ENCODE measurements at regions of chr2 and their contacts with region 1.

Region 1: GRCh38 chr2:161160226-161161069 is at the start of gene TANK:
- DNase-seq: peak; percentile 95
- ATAC-seq: peak; percentile 95
- H3K4me3 Mint-ChIP-seq: peak within 1 kb of the TSS; percentile 91
- H3K27ac Mint-ChIP-seq: peak within 1 kb of the TSS; percentile 99
- H3K4me1 Mint-ChIP-seq: peaks cover 52% of the 10 kb centered on the region
- H3K27me3 Mint-ChIP-seq: no peaks in the 10 kb centered on the region
- total RNA-seq, gene TANK: 54.6 to 59.7 TPM

Region 2: GRCh38 chr2:159904127-159904958 is 1256.1 kb before region 1 on chr2:
- CTCF ChIA-PET with region 1: no interaction called
- POLR2A ChIA-PET with region 1: no interaction called
- intact Hi-C with region 1: loop called (anchors 10 kb)
- DNase-seq: peak; percentile 91
- ATAC-seq: peak; percentile 76
- H3K4me3 Mint-ChIP-seq: peak within 1 kb of the TSS; percentile 93
- H3K27ac Mint-ChIP-seq: peak within 1 kb of the TSS; percentile 97
- H3K4me1 Mint-ChIP-seq: peaks cover 73% of the 10 kb centered on the region
- H3K27me3 Mint-ChIP-seq: no peaks in the 10 kb centered on the region

Region 3: DNA sequence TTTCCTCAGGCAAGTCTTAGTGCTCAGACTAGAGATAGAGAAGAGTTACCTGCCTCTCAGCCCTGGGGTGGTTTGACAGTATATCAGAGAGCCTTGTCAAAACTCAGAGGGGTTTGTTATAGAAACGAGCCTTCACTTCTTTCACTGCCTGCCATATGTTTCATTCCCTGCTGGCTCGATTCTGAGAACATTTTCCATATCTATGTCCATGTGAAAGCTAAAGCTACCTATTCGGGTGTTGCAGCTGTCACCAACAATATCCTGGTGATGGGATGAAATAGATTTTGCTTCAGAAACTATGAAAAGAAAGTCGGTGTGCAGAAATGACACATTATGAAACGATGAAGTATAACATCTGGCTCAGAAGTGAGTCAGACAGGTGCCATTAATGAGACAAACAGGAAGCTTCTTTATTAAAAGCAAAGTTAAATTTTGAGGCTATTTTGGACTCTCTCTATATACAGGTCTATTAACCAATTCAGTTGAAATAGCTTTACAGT is 56.3 kb before region 1 on chr2:
- CTCF ChIA-PET with region 1: no interaction called
- POLR2A ChIA-PET with region 1: no interaction called
- intact Hi-C with region 1: loop called in 1 of 2 experiments (anchors 2 kb)
- DNase-seq: peak; percentile 10
- ATAC-seq: peak; percentile 84
- H3K4me3 Mint-ChIP-seq: no peak overlapping the region
- H3K27ac Mint-ChIP-seq: no peak overlapping the region
- H3K4me1 Mint-ChIP-seq: peaks cover 32% of the 10 kb centered on the region
- H3K27me3 Mint-ChIP-seq: no peaks in the 10 kb centered on the region

Region 4: GRCh38 chr2:161130354-161130753 is 30.1 kb before region 1 on chr2:
- CTCF ChIA-PET with region 1: no interaction called
- POLR2A ChIA-PET with region 1: no interaction called
- intact Hi-C with region 1: no loop called
- DNase-seq: no peak
- ATAC-seq: no peak
- H3K4me3 Mint-ChIP-seq: no peak overlapping the region
- H3K27ac Mint-ChIP-seq: no peak overlapping the region
- H3K4me1 Mint-ChIP-seq: peaks cover 25% of the 10 kb centered on the region
- H3K27me3 Mint-ChIP-seq: peaks cover 3% of the 10 kb centered on the region

Region 5: GRCh38 chr2:161147856-161148569 is 12.4 kb before region 1 on chr2:
- CTCF ChIA-PET with region 1: interaction called, 3 read pairs
- POLR2A ChIA-PET with region 1: no interaction called
- intact Hi-C with region 1: loop called in 1 of 2 experiments (anchors 1 kb)
- DNase-seq: no peak
- ATAC-seq: no peak
- H3K4me3 Mint-ChIP-seq: no peak overlapping the region
- H3K27ac Mint-ChIP-seq: no peak overlapping the region
- H3K4me1 Mint-ChIP-seq: peaks cover 38% of the 10 kb centered on the region
- H3K27me3 Mint-ChIP-seq: no peaks in the 10 kb centered on the region

Region 6: DNA sequence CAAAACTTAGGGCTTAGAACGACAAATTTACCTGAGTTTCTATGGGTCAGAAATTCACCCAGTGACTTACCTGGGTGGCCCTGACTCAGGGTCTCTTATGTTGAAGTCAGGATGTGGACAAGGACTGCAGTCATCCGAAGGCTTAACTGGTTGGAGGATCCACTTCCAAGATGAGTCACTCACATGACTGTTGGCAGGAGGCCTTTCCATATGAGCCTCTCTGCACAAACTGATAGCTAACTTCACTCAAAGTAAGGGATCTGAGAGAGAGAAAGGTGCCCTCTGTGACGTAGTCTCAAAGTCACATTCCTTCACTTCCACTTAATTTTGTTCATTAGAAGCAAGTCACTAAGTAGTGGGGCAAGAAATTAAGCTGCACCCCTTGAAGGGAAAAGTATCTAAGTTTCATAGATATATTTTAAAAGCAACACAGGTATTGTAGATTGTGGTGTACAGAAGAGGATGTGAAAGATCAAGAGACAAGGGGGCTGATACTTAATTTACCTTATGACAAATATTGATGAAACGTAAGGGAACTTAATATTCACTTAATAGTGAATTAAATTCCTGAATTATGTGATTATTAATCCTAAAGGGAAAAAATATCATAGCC is 48.2 kb after region 1 on chr2:
- CTCF ChIA-PET with region 1: no interaction called
- POLR2A ChIA-PET with region 1: no interaction called
- intact Hi-C with region 1: no loop called
- DNase-seq: no peak
- ATAC-seq: no peak
- H3K4me3 Mint-ChIP-seq: no peak overlapping the region
- H3K27ac Mint-ChIP-seq: no peak overlapping the region
- H3K4me1 Mint-ChIP-seq: peaks cover 7% of the 10 kb centered on the region
- H3K27me3 Mint-ChIP-seq: no peaks in the 10 kb centered on the region

Region 7: GRCh38 chr2:161954103-161954502 is 793.7 kb after region 1 on chr2:
- CTCF ChIA-PET with region 1: no interaction called
- POLR2A ChIA-PET with region 1: no interaction called
- intact Hi-C with region 1: loop called in 1 of 2 experiments (anchors 10 kb)
- DNase-seq: no peak
- ATAC-seq: peak; percentile 15
- H3K4me3 Mint-ChIP-seq: no peak overlapping the region
- H3K27ac Mint-ChIP-seq: peak overlapping the region; percentile 89
- H3K4me1 Mint-ChIP-seq: peaks cover 54% of the 10 kb centered on the region
- H3K27me3 Mint-ChIP-seq: no peaks in the 10 kb centered on the region

Measured in activated CD4-positive, alpha-beta T cell treated with anti-CD3 and anti-CD28 coated beads for 36 hours (primary cell).